Common myeloid progenitor, CD34-positive (primary cell): ENCODE measurements at regions of chr5 and their contacts with region 1.

Region 1: DNA sequence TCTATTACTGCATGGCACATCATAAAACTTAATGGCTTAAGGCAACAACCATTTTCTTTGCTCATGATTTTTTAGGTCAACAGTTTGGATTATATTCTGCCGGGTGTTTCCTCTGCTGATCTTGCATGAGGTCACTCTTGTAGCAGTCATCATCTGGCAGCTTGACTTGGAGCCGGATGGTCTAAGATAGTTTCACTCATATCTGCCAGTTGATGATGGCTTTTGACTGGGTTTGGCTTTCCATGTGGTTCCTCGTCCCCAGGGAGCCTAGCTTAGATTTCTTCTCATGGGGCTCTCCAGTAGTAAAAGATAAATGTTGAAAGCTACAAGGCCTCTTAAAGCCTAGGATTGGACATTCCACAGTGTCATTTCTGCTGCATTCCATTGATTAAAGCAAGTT is 27.4 kb downstream of the LNPEP start:
- DNase-seq: peak; percentile 29 to 90 (median 90)
- H3K4me3 ChIP-seq: peak overlapping the region in 1 of 7 experiments; percentile 31
- H3K27ac ChIP-seq: peak overlapping the region in 1 of 2 experiments; percentile 55
- H3K4me1 ChIP-seq: peaks cover 25 to 39% (median 31%) of the 10 kb centered on the region in 4 experiments
- H3K27me3 ChIP-seq: no peaks in the 10 kb centered on the region

Region 2: DNA sequence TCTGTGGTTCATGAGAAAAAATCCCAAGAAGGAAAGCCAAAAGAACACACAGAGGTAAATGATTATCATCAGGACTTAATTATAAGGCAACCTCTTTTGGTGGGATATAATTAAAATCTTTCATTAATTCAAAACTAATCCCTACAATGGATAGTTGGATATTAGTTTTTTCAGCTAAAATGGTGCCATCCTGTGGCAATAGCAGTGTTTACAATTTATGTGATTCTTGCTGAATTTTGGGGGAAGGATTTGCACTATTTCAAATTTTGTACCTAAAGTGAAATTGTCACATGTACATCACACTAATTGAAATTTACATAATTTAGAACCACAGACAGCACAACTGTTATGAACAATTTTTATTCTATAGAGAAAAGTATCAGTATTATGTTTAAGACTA is 234.1 kb before region 1 on chr5:
- CTCF ChIA-PET with region 1: no interaction called
- POLR2A ChIA-PET with region 1: no interaction called
- DNase-seq: no peak
- H3K4me3 ChIP-seq: no peak overlapping the region
- H3K27ac ChIP-seq: no peak overlapping the region
- H3K4me1 ChIP-seq: no peaks in the 10 kb centered on the region
- H3K27me3 ChIP-seq: no peaks in the 10 kb centered on the region

Region 3: DNA sequence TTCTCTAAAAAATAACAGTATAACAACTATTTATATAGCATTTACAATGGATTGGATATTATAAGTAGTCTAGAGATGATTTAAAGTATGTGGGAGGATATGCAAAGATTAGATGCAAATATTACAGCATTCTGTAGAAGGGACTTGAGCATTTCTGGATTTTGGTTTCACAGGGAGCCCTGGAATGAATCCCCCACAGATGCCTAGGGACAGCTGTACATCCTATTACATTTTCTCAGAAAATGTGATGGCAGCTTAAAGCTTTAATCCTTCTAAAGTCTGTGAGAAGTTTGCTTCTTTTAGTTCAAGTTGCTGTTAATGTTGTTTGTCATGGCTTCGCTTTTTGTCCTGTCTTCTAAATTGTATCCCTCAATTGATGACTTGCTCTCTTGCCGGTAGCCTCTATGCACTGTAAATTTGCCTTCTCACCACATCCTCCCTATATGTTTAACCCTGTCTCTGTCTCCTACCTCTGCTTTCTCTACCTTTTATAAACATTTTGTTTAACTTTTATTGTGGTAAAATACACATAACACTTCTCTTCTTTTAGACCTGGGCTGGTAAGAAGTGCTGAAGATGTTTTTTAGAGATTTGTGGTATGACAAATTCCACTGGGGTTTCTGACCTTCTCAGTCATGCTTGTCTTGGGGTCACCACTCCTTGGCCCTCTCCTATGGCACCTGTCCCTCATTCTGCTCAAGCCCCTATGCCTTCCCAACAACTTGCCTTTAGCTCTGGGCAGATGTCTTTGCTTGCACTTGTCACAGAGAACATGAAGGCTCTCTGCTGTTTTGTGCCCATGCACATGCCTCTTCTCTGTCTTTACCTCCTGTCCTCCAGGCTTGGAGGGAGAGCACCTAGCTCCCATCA is 10.5 kb after region 1 on chr5:
- CTCF ChIA-PET with region 1: interaction called, 19 read pairs
- POLR2A ChIA-PET with region 1: no interaction called
- DNase-seq: peak in 1 of 3 donors; percentile 19
- H3K4me3 ChIP-seq: no peak overlapping the region
- H3K27ac ChIP-seq: no peak overlapping the region
- H3K4me1 ChIP-seq: peaks cover 3 to 21% (median 6%) of the 10 kb centered on the region in 4 experiments
- H3K27me3 ChIP-seq: no peaks in the 10 kb centered on the region